ENCODE measurements at regions of chr22 and their contacts with region 1.

Region 1: DNA sequence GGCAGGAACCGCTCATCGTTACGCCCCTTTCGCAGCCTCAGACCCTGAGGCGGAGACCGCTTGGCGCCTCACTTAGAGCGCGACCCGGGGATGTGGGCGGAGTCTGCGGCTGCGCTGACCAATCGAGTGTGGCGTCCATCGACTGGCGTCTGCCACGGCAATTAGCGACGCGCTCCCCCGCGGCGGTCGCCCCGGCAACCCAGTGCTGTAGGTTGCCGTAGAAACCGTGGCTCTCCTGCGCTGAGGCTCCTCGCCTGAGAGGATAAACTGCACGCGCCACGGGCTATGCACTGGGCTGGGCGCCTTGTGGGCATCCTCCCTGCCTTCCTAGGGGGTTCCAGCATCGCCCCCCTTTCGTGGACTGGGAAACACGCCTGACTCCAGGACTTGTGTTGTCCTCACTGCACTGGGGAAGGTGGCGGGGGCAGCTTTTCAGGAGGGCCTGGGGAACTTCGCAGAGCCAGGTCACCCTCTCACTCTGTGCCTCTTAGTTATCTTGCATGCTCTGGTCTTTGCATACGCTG is 701 bp upstream of the P2RX6 start:
- DNase-seq: peak; percentile 67 to 94 (median 80)
- ATAC-seq: peak; percentile 88
- H3K4me3 ChIP-seq: peak overlapping the region; percentile 59
- H3K4me3 Mint-ChIP-seq: peak overlapping the region; percentile 86
- H3K27ac ChIP-seq: peak overlapping the region; percentile 27 to 79
- H3K27ac Mint-ChIP-seq: peak overlapping the region; percentile 81
- H3K4me1 ChIP-seq: peaks cover 26% of the 10 kb centered on the region
- H3K4me1 Mint-ChIP-seq: peaks cover 30% of the 10 kb centered on the region
- H3K27me3 ChIP-seq: no peaks in the 10 kb centered on the region
- H3K27me3 Mint-ChIP-seq: no peaks in the 10 kb centered on the region
- CTCF ChIP-seq: no peak

Region 2: DNA sequence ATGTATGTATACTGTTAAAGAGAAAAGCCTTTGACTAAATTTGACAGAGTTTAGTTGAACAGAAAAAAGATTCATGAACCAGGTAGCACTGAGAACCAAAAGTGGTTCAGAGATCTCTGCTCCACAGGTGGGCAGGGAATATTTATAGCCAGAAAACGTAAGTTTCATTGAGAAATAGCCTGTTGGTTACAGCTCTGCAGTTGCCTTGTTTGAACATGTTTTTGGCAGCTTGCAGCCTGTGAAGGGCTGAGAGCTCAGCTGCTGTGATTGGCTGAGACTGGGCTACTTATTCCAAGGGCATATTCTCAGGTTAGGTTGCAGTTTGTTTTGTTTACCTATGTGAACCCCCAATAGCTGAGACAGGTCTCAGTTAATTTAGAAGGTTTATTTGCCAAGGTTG is 633.8 kb before region 1 on chr22:
- CTCF ChIA-PET with region 1: no interaction called
- POLR2A ChIA-PET with region 1: no interaction called
- intact Hi-C with region 1: no loop called
- DNase-seq: no peak
- ATAC-seq: no peak
- H3K4me3 ChIP-seq: no peak overlapping the region
- H3K4me3 Mint-ChIP-seq: no peak overlapping the region
- H3K27ac ChIP-seq: no peak overlapping the region
- H3K27ac Mint-ChIP-seq: no peak overlapping the region
- H3K4me1 ChIP-seq: no peaks in the 10 kb centered on the region
- H3K4me1 Mint-ChIP-seq: no peaks in the 10 kb centered on the region
- H3K27me3 ChIP-seq: no peaks in the 10 kb centered on the region
- H3K27me3 Mint-ChIP-seq: no peaks in the 10 kb centered on the region
- CTCF ChIP-seq: no peak

Region 3: GRCh38 chr22:21001560-21002325 is 12.5 kb before region 1 on chr22 and contains the start of gene THAP7:
- CTCF ChIA-PET with region 1: no interaction called
- POLR2A ChIA-PET with region 1: interaction called, 22 read pairs
- intact Hi-C with region 1: loop called in 1 of 2 experiments (anchors 1 kb)
- DNase-seq: peak; percentile 94 to 99 (median 96)
- ATAC-seq: peak; percentile 87
- H3K4me3 ChIP-seq: peak within 1 kb of the TSS; percentile 82
- H3K4me3 Mint-ChIP-seq: peak within 1 kb of the TSS; percentile 93
- H3K27ac ChIP-seq: peak within 1 kb of the TSS; percentile 96 to 100
- H3K27ac Mint-ChIP-seq: peak within 1 kb of the TSS; percentile 97
- H3K4me1 ChIP-seq: peaks cover 54% of the 10 kb centered on the region
- H3K4me1 Mint-ChIP-seq: peaks cover 46% of the 10 kb centered on the region
- H3K27me3 ChIP-seq: no peaks in the 10 kb centered on the region
- H3K27me3 Mint-ChIP-seq: no peaks in the 10 kb centered on the region
- CTCF ChIP-seq: no peak
- total RNA-seq, gene THAP7: 82.7 to 84.0 TPM